Brain microvascular endothelial cell (primary cell): ENCODE measurements at regions of chr1 and their contacts with region 1.

Region 1: DNA sequence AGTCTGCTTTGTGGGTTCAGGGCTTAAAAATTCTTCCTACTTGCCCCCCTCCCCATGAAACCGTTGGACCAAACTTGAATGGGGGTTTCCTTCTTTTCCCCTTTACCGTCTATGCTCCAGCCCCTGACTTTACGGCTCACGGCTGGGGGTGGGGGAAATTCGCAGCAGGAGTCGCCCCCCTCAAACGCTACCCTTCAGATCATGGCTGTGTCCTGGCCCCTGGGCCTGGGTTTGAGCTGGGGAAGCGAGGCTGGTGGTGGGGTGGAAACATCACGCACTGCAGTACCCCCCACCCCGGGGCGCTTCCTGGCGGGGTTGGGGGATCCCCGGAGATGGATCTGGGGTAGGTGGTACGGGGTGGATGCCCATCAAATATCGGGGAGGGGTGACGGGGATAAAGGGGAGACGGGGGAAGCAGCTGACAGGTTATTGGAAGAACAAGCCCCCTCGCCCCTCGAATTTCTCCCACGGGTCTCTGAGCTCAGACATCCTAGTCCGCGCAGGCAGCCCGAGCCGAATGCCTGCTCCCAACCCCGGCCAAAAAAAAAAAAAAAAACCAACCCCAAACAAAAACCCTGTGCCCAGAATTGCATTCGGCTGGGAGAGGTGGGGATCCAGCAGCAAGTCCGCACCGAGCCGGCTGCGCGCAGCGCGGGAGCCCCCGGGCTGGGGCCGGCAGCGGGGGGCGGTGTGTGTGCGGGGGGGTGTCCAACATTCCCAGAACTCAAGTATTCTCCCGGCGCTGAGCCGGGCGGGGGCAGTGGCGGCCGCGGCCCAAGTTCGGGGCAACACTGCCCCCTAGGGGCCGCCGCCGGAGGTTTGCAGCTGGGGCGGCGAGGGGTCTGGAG is 59.0 kb upstream of the ACOT11 start:
- DNase-seq: peak; percentile 39
- H3K4me3 ChIP-seq: peak overlapping the region; percentile 61
- H3K27ac ChIP-seq: peak overlapping the region; percentile 57
- H3K27me3 ChIP-seq: peaks cover 4% of the 10 kb centered on the region
- CTCF ChIP-seq: peak; percentile 74

Region 2: DNA sequence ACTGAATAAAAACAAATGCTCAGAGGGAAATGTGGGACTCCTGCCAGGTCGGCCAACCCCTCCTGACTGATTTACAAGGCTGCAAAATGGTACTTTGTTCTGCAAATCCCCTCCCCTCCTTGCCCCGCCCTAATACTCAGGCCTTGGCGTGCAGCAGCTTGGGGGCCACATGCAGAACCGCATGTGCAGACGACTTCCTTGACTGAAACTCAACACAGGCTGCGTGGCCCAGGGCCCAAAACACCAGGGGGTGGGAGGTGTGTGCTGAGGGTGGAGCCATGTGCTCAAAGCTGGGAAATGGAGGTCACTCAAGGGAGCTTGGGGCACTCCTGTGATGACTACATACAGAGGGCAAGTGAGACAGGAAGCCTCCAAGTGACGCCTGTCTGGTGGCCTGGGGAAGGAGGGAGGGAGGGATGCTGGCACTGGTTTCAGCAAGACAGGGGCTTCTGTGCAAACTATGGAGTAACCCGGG is 201.8 kb before region 1 on chr1:
- in situ Hi-C with region 1: loop called (anchors 25 kb)
- DNase-seq: peak; percentile 70
- H3K4me3 ChIP-seq: no peak overlapping the region
- H3K27ac ChIP-seq: peak overlapping the region; percentile 68
- H3K27me3 ChIP-seq: no peaks in the 10 kb centered on the region
- CTCF ChIP-seq: no peak

Region 3: GRCh38 chr1:54406339-54407153 is 82.5 kb before region 1 on chr1 and contains the start of gene SSBP3:
- in situ Hi-C with region 1: loop called (anchors 5 kb)
- DNase-seq: peak; percentile 89
- H3K4me3 ChIP-seq: peak within 1 kb of the TSS; percentile 68
- H3K27ac ChIP-seq: peak within 1 kb of the TSS; percentile 71
- H3K27me3 ChIP-seq: no peaks in the 10 kb centered on the region
- CTCF ChIP-seq: no peak

Region 4: DNA sequence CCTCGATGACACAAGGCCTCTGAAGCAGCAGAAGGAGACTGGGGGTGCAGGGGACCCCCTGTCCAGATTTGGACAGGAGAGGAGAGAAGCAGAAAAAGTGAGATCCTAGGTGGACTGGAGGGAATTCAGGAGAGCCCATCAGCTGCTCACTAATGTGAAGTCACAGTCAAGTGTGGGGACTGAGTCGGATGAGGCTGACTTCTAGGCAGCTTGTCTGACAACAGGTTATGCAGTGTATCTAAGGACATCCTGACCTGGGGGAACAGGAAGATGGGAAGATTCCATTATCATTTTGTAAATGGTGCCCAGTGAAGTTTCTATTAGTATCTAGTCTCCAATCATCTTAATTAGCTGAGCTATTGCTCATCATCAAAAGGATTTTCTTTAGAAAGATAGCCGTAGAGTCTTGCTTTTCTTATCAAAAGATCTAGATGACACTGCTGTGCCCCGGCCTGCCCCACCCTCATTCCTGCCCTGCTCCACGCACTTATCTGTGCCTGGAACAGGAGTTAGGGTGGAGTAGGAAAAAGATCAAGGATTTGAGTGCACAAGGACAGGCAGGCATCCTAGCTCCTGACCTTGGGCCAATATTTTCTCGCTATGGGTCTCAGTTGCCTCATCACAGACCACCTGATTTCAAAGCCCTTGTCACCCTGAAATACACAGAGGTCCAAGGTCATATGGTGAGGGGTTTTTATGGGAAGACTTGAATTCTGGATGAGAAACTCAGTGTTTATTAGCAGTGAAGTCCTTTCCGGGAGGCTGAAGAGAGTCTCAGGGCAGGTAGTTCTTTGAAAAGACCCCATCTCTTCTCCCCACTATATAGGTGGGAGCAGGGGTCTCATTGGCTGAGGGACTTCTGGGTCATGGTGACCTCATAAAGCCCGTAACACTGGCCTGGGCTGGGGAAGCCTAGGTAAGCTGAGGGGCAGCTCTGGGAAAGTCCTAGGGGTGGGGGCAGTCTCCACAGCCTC is 152.1 kb after region 1 on chr1 and contains the start of gene MROH7:
- in situ Hi-C with region 1: no loop called
- DNase-seq: no peak
- H3K4me3 ChIP-seq: no peak within 1 kb of the TSS
- H3K27ac ChIP-seq: no peak within 1 kb of the TSS
- H3K27me3 ChIP-seq: no peaks in the 10 kb centered on the region
- CTCF ChIP-seq: no peak

Region 5: DNA sequence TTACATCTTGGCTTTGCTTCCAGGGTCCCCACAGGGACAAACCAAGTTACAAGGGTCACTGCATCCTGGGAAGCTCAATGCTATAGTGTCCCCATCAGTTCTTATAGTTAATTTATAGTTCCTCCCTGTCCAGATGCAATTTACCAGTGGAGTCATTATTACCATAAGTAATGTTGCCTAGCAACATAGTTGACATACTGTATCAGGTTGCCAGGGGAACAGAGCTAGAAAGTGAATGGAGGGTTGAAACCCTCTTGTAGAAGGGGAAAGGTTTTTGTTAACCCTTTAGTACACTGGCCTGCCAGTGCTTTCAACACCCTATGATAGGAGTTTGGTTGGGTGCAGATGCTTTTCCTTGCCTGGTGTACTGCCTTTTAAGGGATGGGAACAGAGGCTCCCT is 192.4 kb after region 1 on chr1:
- in situ Hi-C with region 1: no loop called
- DNase-seq: peak; percentile 18
- H3K4me3 ChIP-seq: no peak overlapping the region
- H3K27ac ChIP-seq: no peak overlapping the region
- H3K27me3 ChIP-seq: no peaks in the 10 kb centered on the region
- CTCF ChIP-seq: no peak